Lower lobe of right lung (tissue), 2 donors: ENCODE measurements at regions of chr12 and their contacts with region 1.

Region 1: GRCh38 chr12:59149997-59150642 is 229.8 kb upstream of the LRIG3 start:
- DNase-seq: no peak
- ATAC-seq: peak; percentile 91 to 92
- H3K4me3 ChIP-seq: no peak overlapping the region
- H3K27ac ChIP-seq: no peak overlapping the region
- H3K4me1 ChIP-seq: no peaks in the 10 kb centered on the region
- H3K27me3 ChIP-seq: no peaks in the 10 kb centered on the region
- CTCF ChIP-seq: peak; percentile 86

Region 2: DNA sequence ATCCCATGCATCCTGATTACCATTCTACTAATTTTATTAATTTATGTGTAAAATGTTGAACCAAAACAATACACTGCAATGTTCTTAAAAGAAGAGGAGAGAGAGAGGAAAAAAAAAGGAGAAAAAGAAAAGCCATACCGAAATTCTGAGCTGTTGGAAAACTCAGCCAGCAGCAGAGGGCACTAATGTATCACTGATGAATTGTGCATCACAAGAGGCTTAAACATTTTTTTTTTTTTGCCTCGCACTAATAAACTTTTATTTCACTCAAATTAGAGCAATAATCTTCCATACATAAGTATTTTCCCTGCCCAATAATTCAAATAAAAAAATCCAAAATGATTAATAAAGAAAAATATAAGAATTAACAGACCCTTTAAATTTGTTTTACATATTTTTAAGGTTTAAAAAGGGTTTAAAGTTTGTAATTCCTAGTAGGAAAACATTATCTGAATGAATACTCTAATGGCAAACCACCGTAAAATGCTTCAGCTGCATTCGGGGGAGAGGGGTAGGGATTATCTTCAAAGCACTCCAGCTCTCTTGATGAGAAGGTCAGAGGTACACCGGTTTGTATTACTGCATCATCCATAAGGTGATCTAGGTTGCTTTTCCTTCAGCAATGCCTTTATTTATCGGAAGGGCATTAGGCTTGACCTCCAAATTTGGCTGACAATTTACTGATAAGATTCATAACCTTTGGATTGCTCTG is 1166.8 kb before region 1 on chr12:
- intact Hi-C with region 1: loop called (anchors 10 kb)
- DNase-seq: no peak
- ATAC-seq: no peak
- H3K4me3 ChIP-seq: no peak overlapping the region
- H3K27ac ChIP-seq: no peak overlapping the region
- H3K4me1 ChIP-seq: no peaks in the 10 kb centered on the region
- H3K27me3 ChIP-seq: no peaks in the 10 kb centered on the region
- CTCF ChIP-seq: peak; percentile 49